GM13976 (cell line): ENCODE measurements at regions of chr17 and their contacts with region 1.

Region 1: DNA sequence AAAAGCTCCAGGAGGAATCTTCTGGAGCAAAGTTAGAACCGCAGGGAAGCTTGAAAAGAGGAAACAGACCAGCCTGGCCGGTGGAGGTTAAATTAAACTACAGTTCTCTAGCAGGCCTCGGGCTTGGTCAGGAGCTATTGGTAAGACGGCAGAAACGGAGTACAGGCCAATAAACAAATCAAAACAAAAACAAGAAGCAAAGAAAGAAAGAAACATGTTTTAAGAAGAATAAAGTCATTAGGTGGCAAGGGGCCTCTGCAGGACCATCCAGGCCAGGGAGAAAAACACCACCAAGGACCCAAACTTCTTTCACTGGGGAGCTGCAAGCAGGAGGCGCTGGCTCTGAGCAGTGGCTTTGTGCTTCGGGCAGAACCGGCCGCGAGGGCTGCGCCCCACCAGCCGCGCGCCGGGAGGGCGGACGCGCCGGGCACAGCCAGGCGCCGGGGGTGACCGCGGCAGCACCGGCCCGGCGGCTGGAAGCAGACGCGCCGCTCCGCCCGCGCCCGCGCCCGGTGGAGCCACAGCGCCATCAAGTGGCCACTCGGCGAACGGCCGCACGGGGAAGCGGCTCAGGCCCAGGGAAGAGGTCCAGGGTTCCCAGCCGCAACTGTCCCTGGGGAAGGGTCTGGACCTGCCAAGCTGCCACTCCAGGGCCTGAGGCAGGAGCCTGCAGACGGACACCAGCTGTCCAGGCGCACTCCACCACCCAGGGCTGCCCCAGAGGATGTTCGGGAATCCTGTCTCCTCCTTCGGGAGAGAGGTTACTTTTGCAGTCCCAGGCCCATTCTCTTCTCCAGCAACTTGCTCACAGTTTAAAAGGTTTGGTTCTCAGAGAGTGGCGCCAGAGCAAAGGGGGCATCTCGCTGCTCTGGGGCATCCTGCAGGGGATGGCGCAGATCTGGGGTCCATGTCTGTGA is 419.4 kb downstream of the SOX9 start:
- DNase-seq: peak; percentile 92
- CTCF ChIP-seq: peak; percentile 100

Region 2: DNA sequence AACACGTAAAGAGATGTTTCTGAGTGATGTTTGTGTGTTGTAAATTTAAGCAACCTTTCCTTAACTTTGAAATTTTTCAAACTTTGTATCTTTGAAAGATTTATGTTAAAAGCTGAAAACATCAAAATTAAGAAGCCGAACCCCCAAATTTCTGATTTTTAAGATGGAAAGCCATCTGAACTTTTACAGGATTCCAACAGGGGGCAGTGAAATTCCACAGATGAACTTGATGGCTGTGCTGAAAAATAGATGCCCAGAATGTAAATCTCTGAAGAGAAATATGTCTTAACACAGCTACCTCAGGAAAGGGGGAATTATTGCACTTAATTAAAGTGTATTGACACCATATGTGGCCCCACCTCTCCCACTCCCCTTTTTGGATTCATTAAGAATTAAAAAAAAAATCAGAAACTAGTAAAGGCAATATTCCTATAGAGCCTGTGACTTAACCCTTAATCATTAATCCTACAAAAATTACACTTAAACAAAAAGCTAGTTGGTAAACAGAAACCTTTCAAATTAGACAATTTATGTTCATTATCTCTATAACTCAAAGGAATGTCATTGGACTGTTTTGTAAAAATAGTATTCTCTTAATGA is 1773.0 kb before region 1 on chr17:
- in situ Hi-C with region 1: loop called (anchors 25 kb)
- DNase-seq: peak; percentile 28
- CTCF ChIP-seq: peak; percentile 29

Region 3: DNA sequence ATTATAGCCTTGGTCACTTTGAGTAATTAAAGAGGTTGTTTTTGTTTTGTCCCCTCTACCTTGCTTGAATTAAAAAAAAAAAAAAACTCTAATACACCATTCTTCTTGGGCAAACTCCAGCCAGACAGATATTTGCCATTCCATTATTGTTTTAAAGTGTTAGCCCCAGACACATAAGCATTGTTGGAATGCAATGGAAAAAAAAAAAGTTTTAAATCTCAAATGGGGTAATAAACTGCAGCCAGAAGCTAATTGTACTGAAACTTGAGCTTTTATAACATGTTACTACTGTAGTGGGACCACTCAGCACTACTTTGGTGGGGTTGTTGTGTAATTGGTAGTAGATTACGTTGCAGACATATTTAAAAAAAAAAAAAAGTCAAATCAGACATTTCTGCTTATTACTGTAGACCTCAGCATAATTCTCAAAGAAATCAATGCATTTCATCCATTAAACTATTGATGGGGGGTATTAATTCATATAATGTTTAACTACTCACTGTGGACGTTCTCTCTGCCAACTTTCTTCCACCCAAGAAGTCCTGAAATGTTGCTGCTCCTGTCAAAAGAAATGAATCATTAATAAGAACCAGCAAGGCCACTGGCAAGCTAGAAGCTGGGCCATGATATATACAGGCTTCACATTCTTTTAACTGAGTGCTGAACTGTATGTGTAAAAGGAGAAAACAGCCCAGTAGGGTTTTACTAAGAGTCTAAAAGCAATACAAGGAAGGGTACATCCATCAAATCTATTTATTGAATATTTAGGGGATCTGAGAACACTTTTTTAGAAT is 1046.0 kb before region 1 on chr17:
- in situ Hi-C with region 1: loop called (anchors 25 kb)
- DNase-seq: no peak
- CTCF ChIP-seq: no peak

Region 4: GRCh38 chr17:72120642-72121163 is 419.5 kb before region 1 on chr17 and contains the start of gene SOX9:
- in situ Hi-C with region 1: loop called (anchors 25 kb)
- DNase-seq: peak; percentile 92
- CTCF ChIP-seq: no peak